ENCODE measurements at regions of chr13 and their contacts with region 1.

Region 1: GRCh38 chr13:90883592-90883991 is 463.9 kb upstream of the MIR17HG start:
- DNase-seq: no peak
- H3K4me3 Mint-ChIP-seq: no peak overlapping the region
- H3K27ac Mint-ChIP-seq: no peak overlapping the region
- H3K4me1 Mint-ChIP-seq: no peaks in the 10 kb centered on the region
- H3K27me3 Mint-ChIP-seq: no peaks in the 10 kb centered on the region
- CTCF ChIP-seq: no peak

Region 2: GRCh38 chr13:90855513-90855912 is 28.1 kb before region 1 on chr13:
- CTCF ChIA-PET with region 1: no interaction called
- intact Hi-C with region 1: no loop called
- DNase-seq: no peak
- H3K4me3 Mint-ChIP-seq: no peak overlapping the region
- H3K27ac Mint-ChIP-seq: no peak overlapping the region
- H3K4me1 Mint-ChIP-seq: peaks cover 7% of the 10 kb centered on the region
- H3K27me3 Mint-ChIP-seq: no peaks in the 10 kb centered on the region
- CTCF ChIP-seq: no peak

Region 3: GRCh38 chr13:90968166-90968904 is 84.7 kb after region 1 on chr13:
- CTCF ChIA-PET with region 1: no interaction called
- intact Hi-C with region 1: loop called (anchors 5 kb)
- DNase-seq: peak; percentile 9
- H3K4me3 Mint-ChIP-seq: no peak overlapping the region
- H3K27ac Mint-ChIP-seq: no peak overlapping the region
- H3K4me1 Mint-ChIP-seq: no peaks in the 10 kb centered on the region
- H3K27me3 Mint-ChIP-seq: no peaks in the 10 kb centered on the region
- CTCF ChIP-seq: no peak